BJ (cell line): ENCODE measurements at regions of chr3 and their contacts with region 1.

Region 1: DNA sequence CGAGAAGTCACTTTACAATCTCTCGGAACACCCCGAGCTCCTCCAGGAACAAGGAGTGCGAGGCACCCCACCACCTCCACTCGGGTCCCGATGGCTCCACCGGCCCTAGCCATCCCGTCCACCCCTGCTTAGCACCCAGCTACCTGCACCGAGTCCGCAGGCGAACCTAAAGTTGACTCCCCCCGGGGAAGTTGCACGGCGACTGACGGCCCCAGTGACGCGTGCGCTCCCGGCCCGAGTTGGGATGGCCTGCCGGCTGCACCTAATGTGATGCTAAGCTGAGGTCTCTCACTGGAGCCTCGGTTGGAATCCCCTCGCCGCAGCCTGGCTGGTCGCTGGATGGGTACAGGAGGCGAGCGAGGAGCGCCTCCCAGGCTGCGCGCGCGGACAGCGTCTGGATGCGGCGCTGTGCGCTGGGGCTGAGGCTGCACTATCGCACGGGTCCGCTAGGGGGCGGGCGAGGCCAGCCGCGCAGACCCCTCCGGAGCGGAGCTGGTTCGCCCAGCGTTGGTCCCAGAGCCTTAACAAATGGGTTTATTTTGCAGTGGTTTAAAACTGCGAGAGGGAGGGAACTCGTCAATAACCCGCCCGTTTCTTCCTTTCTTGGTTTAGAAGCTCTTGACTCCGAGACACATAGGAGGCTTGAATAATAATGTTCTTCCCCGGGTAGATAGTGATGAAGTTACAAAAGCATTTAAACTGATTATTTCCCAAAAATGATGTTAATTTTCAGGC is at the start of gene OXTR:
- DNase-seq: peak; percentile 68
- H3K4me3 ChIP-seq: peak within 1 kb of the TSS; percentile 73
- H3K27me3 ChIP-seq: no peaks in the 10 kb centered on the region
- CTCF ChIP-seq: peak; percentile 97
- polyA plus RNA-seq, gene OXTR: 168 and 195 TPM in 2 replicates

Region 2: DNA sequence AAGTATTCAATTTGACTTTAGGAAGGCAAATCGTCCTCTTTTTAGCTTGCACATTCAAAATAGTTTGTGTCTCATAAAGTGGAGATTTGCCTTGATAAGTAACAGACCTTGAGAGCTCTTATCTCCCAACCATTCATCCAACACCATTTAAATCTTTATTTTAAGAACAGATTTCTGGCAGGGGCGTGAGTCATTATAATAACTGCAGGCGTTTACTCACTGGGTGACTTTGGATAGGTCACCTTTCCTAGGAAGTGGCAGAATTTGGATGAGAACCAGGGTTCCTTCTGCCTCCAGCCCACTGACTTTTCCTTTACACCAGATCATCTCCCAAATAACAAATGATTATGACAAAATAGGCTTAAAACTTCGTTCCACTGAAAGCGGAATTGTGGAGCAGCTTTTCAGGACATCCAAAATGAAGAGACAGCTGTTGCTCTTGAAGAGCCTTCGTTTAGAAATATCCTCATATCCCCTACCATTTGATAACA is 262.6 kb before region 1 on chr3:
- CTCF ChIA-PET with region 1: no interaction called
- POLR2A ChIA-PET with region 1: no interaction called
- DNase-seq: no peak
- H3K4me3 ChIP-seq: no peak overlapping the region
- H3K27me3 ChIP-seq: no peaks in the 10 kb centered on the region
- CTCF ChIP-seq: no peak

Region 3: GRCh38 chr3:8845641-8846040 is 76.4 kb after region 1 on chr3:
- CTCF ChIA-PET with region 1: interaction called, 23 read pairs
- POLR2A ChIA-PET with region 1: interaction called, 5 read pairs
- DNase-seq: no peak
- H3K4me3 ChIP-seq: no peak overlapping the region
- H3K27me3 ChIP-seq: no peaks in the 10 kb centered on the region
- CTCF ChIP-seq: no peak

Region 4: GRCh38 chr3:8869613-8870012 is 100.4 kb after region 1 on chr3:
- CTCF ChIA-PET with region 1: interaction called, 21 read pairs
- POLR2A ChIA-PET with region 1: no interaction called
- DNase-seq: peak; percentile 90
- H3K4me3 ChIP-seq: no peak overlapping the region
- H3K27me3 ChIP-seq: no peaks in the 10 kb centered on the region
- CTCF ChIP-seq: no peak

Region 5: DNA sequence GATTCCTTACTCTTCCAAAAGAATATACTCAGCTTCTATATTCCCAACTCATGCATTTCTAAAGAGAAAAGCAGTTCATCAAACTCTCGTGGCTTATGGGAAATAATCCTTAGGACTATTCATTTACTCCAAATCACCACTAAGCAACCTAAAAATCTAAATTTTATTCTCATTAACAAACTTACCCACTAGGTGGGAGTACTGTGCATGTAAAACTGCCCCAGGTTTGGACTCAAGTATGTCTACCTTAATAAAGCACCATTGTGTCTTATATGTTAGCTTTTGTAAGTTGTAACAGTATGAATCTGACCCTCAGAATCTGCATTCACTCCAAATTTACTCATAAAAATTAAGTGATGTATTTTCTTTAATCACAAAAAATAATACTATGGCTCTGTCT is 168.8 kb after region 1 on chr3:
- CTCF ChIA-PET with region 1: interaction called, 15 read pairs
- POLR2A ChIA-PET with region 1: interaction called, 4 read pairs
- DNase-seq: no peak
- H3K4me3 ChIP-seq: no peak overlapping the region
- H3K27me3 ChIP-seq: no peaks in the 10 kb centered on the region
- CTCF ChIP-seq: peak; percentile 50

Region 6: DNA sequence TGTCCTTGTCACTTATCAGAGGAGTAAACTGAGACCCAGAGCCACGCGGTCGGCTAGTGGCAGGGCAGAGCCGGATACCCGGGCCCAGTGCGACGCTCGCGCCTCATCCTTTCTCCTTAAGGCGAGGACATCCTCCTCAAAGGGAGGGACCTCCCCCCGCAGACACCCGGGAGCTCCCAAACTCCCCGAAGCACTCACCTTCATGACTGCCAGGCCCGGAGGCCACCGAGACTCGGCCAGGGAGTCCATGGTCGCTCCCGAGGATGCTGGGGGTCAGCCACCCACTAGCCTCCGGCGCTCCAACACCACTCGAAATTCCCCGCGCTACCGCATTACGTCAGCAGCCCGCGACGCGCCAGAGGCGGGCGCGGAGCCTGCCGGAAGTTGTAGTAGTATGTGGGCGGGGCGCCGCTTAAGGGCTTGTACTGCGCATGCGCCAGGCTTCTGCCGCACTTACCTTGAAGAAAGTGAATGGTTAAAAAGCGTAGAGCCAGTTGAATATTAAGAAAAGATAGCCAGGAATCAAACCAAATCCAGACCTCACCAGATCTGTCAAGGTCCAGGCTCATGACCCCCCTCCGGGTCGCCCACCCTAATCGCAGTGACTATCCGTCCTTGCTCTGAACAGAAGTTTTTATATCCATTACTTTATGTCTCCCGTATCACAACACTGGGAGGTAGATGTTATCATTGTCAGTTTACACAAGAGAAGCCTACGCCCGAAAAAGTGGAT is 194.0 kb after region 1 on chr3 and contains the start of gene RAD18:
- CTCF ChIA-PET with region 1: interaction called, 16 read pairs
- POLR2A ChIA-PET with region 1: no interaction called
- DNase-seq: peak; percentile 37
- H3K4me3 ChIP-seq: peak within 1 kb of the TSS; percentile 73
- H3K27me3 ChIP-seq: no peaks in the 10 kb centered on the region
- CTCF ChIP-seq: no peak
- polyA plus RNA-seq, gene RAD18: 13.8 and 17.4 TPM in 2 replicates